ENCODE measurements at regions of chr1 and their contacts with region 1.

Region 1: DNA sequence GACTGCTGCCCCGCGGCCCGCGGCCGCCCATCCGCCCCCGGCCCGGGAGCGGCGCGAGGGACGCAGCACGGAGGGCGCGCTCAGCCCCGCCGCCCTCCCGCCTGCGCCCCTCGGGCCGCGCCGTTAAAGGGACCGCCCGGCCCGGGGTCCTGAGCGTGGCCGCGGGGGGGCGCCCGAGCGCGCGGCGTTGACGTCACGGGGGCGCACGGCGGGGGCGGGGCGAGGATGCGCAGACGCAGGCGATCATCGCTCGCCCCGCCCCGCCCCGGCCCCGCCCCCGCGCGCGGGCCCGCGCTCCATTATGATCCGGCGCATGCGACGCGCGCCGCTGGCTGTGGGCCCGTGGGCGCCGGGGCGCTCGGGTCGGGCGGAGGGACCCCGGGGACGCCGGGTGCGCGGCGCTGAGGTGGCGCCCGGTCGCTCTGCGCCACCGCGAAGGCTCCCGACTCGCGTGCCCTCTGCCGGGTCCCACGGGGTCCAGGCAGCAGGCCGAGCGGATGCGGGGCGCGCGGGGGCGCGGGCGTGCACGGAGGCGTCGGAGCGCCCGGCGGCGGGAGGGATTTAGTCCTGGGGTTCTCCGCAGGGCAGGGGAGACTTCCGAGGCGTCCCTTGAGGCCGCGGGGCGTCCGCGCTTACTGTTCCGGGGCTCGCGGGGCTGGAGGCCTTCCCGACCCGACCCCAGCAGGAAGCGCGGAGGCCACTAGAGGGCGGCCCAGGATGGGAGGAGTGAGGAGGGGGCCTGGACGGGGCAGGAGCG is at the start of gene DVL1:
- DNase-seq: no peak
- H3K4me3 Mint-ChIP-seq: peak within 1 kb of the TSS; percentile 79
- H3K27ac Mint-ChIP-seq: peak within 1 kb of the TSS; percentile 84
- H3K4me1 Mint-ChIP-seq: peaks cover 13% of the 10 kb centered on the region
- H3K27me3 Mint-ChIP-seq: no peaks in the 10 kb centered on the region
- CTCF ChIP-seq: peak; percentile 43
- total RNA-seq, gene DVL1: 96.2 and 113 TPM in 2 replicates

Region 2: GRCh38 chr1:1307908-1308755 is 41.3 kb before region 1 on chr1 and contains the starts of genes ACAP3 and PUSL1:
- CTCF ChIA-PET with region 1: interaction called, 4 read pairs
- POLR2A ChIA-PET with region 1: interaction called, 6 read pairs
- intact Hi-C with region 1: loop called (anchors 1 kb)
- DNase-seq: peak; percentile 90
- H3K4me3 Mint-ChIP-seq: peak within 1 kb of the TSS; percentile 81
- H3K27ac Mint-ChIP-seq: peak within 1 kb of the TSS; percentile 63
- H3K4me1 Mint-ChIP-seq: peaks cover 23% of the 10 kb centered on the region
- H3K27me3 Mint-ChIP-seq: no peaks in the 10 kb centered on the region
- CTCF ChIP-seq: no peak
- total RNA-seq, gene ACAP3: 31.5 and 33.5 TPM in 2 replicates
- total RNA-seq, gene PUSL1: 15.9 and 27.4 TPM in 2 replicates

Region 3: GRCh38 chr1:1324521-1325287 is 24.7 kb before region 1 on chr1 and contains the starts of genes CPTP and INTS11:
- CTCF ChIA-PET with region 1: interaction called, 4 read pairs
- POLR2A ChIA-PET with region 1: interaction called, 21 read pairs
- intact Hi-C with region 1: no loop called
- DNase-seq: peak; percentile 90
- H3K4me3 Mint-ChIP-seq: peak within 1 kb of the TSS; percentile 70
- H3K27ac Mint-ChIP-seq: peak within 1 kb of the TSS; percentile 85
- H3K4me1 Mint-ChIP-seq: peaks cover 20% of the 10 kb centered on the region
- H3K27me3 Mint-ChIP-seq: no peaks in the 10 kb centered on the region
- CTCF ChIP-seq: no peak
- total RNA-seq, gene CPTP: 19.3 and 21.0 TPM in 2 replicates
- total RNA-seq, gene INTS11: 122 and 129 TPM in 2 replicates

Region 4: DNA sequence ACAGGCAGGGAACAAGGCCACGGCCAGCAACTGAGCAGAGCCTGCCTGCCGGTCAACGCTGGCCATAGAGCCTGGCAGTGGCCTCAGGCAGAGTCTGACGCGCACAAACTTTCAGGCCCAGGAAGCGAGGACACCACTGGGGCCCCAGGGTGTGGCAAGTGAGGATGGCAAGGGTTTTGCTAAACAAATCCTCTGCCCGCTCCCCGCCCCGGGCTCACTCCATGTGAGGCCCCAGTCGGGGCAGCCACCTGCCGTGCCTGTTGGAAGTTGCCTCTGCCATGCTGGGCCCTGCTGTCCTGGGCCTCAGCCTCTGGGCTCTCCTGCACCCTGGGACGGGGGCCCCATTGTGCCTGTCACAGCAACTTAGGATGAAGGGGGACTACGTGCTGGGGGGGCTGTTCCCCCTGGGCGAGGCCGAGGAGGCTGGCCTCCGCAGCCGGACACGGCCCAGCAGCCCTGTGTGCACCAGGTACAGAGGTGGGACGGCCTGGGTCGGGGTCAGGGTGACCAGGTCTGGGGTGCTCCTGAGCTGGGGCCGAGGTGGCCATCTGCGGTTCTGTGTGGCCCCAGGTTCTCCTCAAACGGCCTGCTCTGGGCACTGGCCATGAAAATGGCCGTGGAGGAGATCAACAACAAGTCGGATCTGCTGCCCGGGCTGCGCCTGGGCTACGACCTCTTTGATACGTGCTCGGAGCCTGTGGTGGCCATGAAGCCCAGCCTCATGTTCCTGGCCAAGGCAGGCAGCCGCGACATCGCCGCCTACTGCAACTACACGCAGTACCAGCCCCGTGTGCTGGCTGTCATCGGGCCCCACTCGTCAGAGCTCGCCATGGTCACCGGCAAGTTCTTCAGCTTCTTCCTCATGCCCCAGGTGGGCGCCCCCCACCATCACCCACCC is 18.1 kb before region 1 on chr1 and contains the start of gene TAS1R3:
- CTCF ChIA-PET with region 1: interaction called, 8 read pairs
- POLR2A ChIA-PET with region 1: interaction called, 28 read pairs
- intact Hi-C with region 1: no loop called
- DNase-seq: peak; percentile 64
- H3K4me3 Mint-ChIP-seq: no peak within 1 kb of the TSS
- H3K27ac Mint-ChIP-seq: no peak within 1 kb of the TSS
- H3K4me1 Mint-ChIP-seq: peaks cover under 1% of the 10 kb centered on the region
- H3K27me3 Mint-ChIP-seq: no peaks in the 10 kb centered on the region
- CTCF ChIP-seq: no peak
- total RNA-seq, gene TAS1R3: 0.17 TPM in 1 of 2 replicates, not detected in the other

Region 5: GRCh38 chr1:1399187-1399871 is 49.9 kb after region 1 on chr1 and contains the start of gene CCNL2:
- CTCF ChIA-PET with region 1: interaction called, 3 read pairs
- POLR2A ChIA-PET with region 1: interaction called, 21 read pairs
- intact Hi-C with region 1: no loop called
- DNase-seq: peak; percentile 97
- H3K4me3 Mint-ChIP-seq: peak within 1 kb of the TSS; percentile 88
- H3K27ac Mint-ChIP-seq: peak within 1 kb of the TSS; percentile 85
- H3K4me1 Mint-ChIP-seq: peaks cover 18% of the 10 kb centered on the region
- H3K27me3 Mint-ChIP-seq: no peaks in the 10 kb centered on the region
- CTCF ChIP-seq: peak; percentile 46
- total RNA-seq, gene CCNL2: 230 and 248 TPM in 2 replicates